ENCODE measurements at regions of chr1 and their contacts with region 1.

Region 1: GRCh38 chr1:183180634-183181056 is 5.4 kb upstream of the LAMC2 start:
- DNase-seq: peak; percentile 87
- H3K4me3 Mint-ChIP-seq: peak overlapping the region; percentile 23
- H3K27ac Mint-ChIP-seq: peak overlapping the region; percentile 96
- H3K4me1 Mint-ChIP-seq: peaks cover 42% of the 10 kb centered on the region
- H3K27me3 Mint-ChIP-seq: no peaks in the 10 kb centered on the region
- CTCF ChIP-seq: no peak

Region 2: GRCh38 chr1:183166454-183166853 is 14.2 kb before region 1 on chr1:
- CTCF ChIA-PET with region 1: interaction called, 8 read pairs
- POLR2A ChIA-PET with region 1: interaction called, 69 read pairs
- intact Hi-C with region 1: loop called (anchors 1 kb)
- DNase-seq: no peak
- H3K4me3 Mint-ChIP-seq: no peak overlapping the region
- H3K27ac Mint-ChIP-seq: no peak overlapping the region
- H3K4me1 Mint-ChIP-seq: peaks cover 18% of the 10 kb centered on the region
- H3K27me3 Mint-ChIP-seq: no peaks in the 10 kb centered on the region
- CTCF ChIP-seq: no peak

Measured in MCF 10A (cell line).